ENCODE measurements at regions of chr12 and their contacts with region 1.

Region 1: DNA sequence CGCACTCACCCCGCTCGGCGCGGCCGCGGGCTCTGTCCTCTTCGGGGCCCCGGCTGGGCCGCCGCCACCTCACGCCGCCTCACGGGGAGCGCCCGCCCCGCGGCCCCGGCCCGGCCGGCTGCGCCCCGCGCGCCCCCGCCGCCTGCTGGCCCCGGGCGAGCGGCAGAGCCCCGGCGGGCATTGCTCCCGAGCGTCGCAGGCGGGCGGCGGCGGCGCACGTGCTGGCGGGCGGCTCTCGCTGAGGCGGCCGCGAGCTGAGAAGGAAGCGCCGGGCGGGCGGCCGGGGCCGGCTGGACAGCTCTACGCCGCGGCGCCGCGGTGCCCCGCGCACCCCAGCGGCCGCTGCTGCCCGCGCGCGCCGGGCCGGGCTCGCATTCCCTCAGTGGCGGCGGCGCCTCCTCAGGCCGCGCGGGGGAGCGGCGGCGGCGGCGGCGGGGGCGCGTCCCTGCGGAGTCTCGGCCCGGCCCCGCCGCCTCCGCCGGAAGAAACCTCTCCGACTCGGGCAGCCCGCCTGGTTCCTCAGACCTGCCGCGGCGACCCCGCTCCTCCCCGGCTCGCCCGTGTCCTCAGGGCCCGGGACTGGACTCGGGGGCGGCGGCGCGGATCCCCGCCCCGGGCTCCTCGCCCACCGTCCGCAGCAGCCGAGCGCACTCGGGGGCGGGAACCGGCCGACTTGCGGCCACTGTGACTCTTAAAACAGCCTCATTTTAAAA is at the start of gene PITPNM2:
- DNase-seq: peak; percentile 64 to 89
- ATAC-seq: peak; percentile 82
- H3K4me3 ChIP-seq: peak within 1 kb of the TSS; percentile 82 to 93
- H3K27ac ChIP-seq: peak within 1 kb of the TSS in 1 of 2 donors; percentile 46
- H3K4me1 ChIP-seq: no peaks in the 10 kb centered on the region
- H3K27me3 ChIP-seq: no peaks in the 10 kb centered on the region
- total RNA-seq, gene PITPNM2: 18.1 to 32.4 TPM

Region 2: DNA sequence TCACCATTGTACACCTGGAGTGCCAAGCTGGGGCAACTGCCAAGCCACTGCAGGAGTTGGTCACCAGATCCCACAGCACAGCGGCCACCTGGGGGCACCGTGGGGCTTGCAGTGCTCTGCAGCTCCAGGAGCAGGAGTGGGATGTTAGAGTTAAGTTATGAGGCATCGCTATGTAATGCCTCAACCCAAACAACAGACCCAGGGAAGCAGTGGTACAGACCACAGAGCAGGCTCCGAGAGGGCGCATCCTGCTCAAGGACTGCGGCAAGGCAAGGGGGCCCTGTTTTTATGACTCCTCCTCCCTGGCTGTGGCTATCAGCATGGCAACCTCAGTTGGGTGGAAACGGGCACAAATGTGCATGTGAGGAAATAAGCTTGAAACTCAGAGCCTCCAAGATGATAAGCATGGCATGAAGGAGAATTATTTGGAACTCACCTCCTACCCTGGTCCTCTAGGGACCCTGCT is 107.3 kb before region 1 on chr12:
- intact Hi-C with region 1: loop called (anchors 2 to 5 kb)
- DNase-seq: peak; percentile 91 to 96
- ATAC-seq: peak; percentile 91
- H3K4me3 ChIP-seq: no peak overlapping the region
- H3K27ac ChIP-seq: peak overlapping the region in 1 of 2 donors; percentile 43
- H3K4me1 ChIP-seq: no peaks in the 10 kb centered on the region
- H3K27me3 ChIP-seq: no peaks in the 10 kb centered on the region

Region 3: GRCh38 chr12:123062681-123063486 is 88.0 kb before region 1 on chr12:
- intact Hi-C with region 1: loop called in 1 of 2 experiments (anchors 5 kb)
- DNase-seq: peak in 1 of 2 donors; percentile 71
- ATAC-seq: peak; percentile 69
- H3K4me3 ChIP-seq: no peak overlapping the region
- H3K27ac ChIP-seq: peak overlapping the region; percentile 2 to 90
- H3K4me1 ChIP-seq: peaks cover 6 to 8% of the 10 kb centered on the region in 2 donors
- H3K27me3 ChIP-seq: no peaks in the 10 kb centered on the region

Region 4: GRCh38 chr12:123085730-123086487 is 65.0 kb before region 1 on chr12:
- intact Hi-C with region 1: loop called in 1 of 2 experiments (anchors 5 kb)
- DNase-seq: peak; percentile 67 to 88
- ATAC-seq: peak; percentile 49
- H3K4me3 ChIP-seq: no peak overlapping the region
- H3K27ac ChIP-seq: no peak overlapping the region
- H3K4me1 ChIP-seq: no peaks in the 10 kb centered on the region
- H3K27me3 ChIP-seq: no peaks in the 10 kb centered on the region

Region 5: GRCh38 chr12:123232807-123233543 is 82.1 kb after region 1 on chr12 and contains the starts of genes MPHOSPH9 and MTRFR:
- intact Hi-C with region 1: loop called (anchors 2 to 5 kb)
- DNase-seq: peak; percentile 99
- ATAC-seq: peak; percentile 100
- H3K4me3 ChIP-seq: peak within 1 kb of the TSS; percentile 46 to 77
- H3K27ac ChIP-seq: peak within 1 kb of the TSS in 1 of 2 donors; percentile 80
- H3K4me1 ChIP-seq: no peaks in the 10 kb centered on the region
- H3K27me3 ChIP-seq: no peaks in the 10 kb centered on the region
- total RNA-seq, gene MPHOSPH9: 13.4 to 25.1 TPM
- total RNA-seq, gene MTRFR: 8.6 to 12.1 TPM

Region 6: DNA sequence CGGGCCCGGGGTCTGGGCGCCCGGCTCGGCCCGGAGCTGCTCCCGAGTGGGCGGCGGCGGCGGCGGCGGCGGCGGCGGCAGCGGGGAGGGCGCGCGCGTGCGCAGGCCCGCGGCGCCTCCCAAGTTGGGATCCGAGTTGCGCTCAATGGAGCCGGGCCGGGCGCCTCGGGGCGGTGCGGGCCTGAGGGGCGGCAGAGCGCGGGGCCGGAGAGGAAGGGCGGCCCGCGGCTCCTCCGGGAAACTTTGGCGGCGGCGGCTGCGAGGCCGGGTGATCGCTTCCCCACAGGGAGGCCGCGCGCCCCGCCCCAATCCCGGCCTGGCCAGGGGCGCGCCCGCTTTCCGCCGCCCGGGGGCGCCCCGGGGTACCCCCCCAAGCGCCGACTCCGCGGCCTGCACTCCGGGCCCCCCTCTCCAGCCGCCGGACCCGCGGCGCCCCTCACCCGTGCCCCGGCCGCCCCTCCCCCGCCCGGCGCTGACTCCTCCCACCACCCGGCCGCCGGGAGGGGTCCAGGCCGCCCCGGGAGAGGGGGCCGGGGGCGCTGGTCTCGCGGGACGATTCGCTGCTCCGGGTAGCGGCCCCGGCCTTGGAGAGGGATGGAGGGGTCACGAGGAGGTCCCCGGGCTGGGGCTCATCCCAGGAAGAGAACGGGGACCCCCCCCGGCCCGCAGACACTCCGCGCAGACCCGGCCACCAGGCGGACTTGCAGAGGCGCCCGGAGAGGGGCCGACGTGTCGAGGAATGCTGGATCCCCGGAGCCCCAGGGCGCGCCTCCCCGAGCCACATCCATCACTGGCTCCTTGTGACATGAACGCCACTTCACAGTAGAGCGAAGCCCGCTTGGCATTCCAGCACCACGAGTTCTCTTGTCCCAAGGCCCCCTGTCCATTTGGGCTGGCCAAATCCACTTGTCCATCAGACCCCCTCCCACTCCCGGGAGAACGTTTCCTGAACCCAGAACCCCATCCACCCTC is 383.1 kb after region 1 on chr12 and contains the start of gene RILPL1:
- intact Hi-C with region 1: no loop called
- DNase-seq: peak; percentile 71 to 85
- ATAC-seq: peak; percentile 73
- H3K4me3 ChIP-seq: peak within 1 kb of the TSS; percentile 85 to 91
- H3K27ac ChIP-seq: peak within 1 kb of the TSS; percentile 89 to 90
- H3K4me1 ChIP-seq: peaks cover 4 to 5% of the 10 kb centered on the region in 2 donors
- H3K27me3 ChIP-seq: no peaks in the 10 kb centered on the region
- total RNA-seq, gene RILPL1: 28.8 to 33.3 TPM

Measured in aorta (tissue), 5 donors.